Activated CD4-positive, alpha-beta T cell treated with anti-CD3 and anti-CD28 coated beads for 36 hours (primary cell): ENCODE measurements at regions of chr9 and their contacts with region 1.

Region 1: GRCh38 chr9:78014776-78015175 is 16.8 kb downstream of the GNAQ start:
- DNase-seq: no peak
- ATAC-seq: no peak
- H3K4me3 Mint-ChIP-seq: no peak overlapping the region
- H3K27ac Mint-ChIP-seq: no peak overlapping the region
- H3K4me1 Mint-ChIP-seq: peaks cover 50% of the 10 kb centered on the region
- H3K27me3 Mint-ChIP-seq: no peaks in the 10 kb centered on the region

Region 2: DNA sequence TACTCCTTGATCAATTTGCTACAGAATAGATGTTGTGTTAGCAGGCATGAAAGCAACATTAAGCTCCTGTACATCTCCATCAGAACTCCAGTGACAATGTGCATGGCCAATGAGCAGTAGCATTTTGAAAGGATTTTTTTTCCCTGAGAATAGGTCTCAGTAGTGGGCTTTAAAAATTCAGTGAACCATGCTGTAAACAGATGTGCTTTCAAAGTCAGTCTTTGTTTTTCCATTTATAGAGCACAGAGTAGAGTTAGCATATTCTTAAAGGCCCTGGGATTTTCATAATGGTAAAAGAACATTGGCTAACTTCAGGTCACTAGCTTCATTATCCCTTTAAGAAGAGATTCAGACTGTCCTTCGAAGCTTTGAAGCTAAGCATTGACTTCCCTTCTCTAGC is 686.7 kb before region 1 on chr9:
- CTCF ChIA-PET with region 1: no interaction called
- POLR2A ChIA-PET with region 1: no interaction called
- intact Hi-C with region 1: no loop called
- DNase-seq: no peak
- ATAC-seq: no peak
- H3K4me3 Mint-ChIP-seq: no peak overlapping the region
- H3K27ac Mint-ChIP-seq: no peak overlapping the region
- H3K4me1 Mint-ChIP-seq: peaks cover 7% of the 10 kb centered on the region
- H3K27me3 Mint-ChIP-seq: no peaks in the 10 kb centered on the region

Region 3: DNA sequence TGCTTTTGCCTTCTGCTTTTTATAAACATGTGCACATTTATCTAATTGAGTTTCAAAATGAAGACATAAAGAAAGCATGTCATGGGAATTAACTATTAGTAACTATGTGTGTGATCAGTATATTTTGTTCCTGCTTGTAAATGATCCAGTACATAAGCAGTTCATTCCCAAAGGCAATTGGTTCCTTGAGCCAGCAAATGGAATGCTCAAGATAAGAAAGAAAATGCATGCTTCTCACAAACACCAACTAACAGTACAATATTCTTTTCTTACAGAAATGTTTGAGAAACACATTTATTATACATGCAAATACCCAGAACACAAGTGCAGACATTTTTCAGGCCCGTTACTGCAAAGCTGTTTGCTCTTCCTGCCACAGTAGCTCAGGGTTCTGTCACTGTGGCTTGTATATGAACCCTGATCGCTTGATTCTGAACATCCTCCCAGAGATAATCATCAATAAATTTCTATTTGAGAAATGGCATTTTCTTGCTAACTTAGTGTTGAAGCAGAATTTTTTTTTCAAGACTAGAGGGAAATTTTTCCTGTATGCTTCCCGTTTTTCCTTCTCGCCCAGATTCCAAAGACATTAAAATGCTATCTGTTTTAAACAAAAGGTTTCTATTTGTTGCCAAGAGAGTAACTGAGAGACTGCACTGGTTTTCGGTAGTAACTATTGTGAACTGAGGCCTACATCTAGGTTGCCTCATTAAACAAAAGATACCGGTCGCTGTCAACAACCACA is 14.9 kb after region 1 on chr9:
- CTCF ChIA-PET with region 1: interaction called, 8 read pairs
- POLR2A ChIA-PET with region 1: no interaction called
- intact Hi-C with region 1: loop called in 1 of 2 experiments (anchors 1 kb)
- DNase-seq: peak; percentile 24
- ATAC-seq: peak; percentile 23
- H3K4me3 Mint-ChIP-seq: peak overlapping the region; percentile 89
- H3K27ac Mint-ChIP-seq: peak overlapping the region; percentile 89
- H3K4me1 Mint-ChIP-seq: peaks cover 46% of the 10 kb centered on the region
- H3K27me3 Mint-ChIP-seq: no peaks in the 10 kb centered on the region

Region 4: DNA sequence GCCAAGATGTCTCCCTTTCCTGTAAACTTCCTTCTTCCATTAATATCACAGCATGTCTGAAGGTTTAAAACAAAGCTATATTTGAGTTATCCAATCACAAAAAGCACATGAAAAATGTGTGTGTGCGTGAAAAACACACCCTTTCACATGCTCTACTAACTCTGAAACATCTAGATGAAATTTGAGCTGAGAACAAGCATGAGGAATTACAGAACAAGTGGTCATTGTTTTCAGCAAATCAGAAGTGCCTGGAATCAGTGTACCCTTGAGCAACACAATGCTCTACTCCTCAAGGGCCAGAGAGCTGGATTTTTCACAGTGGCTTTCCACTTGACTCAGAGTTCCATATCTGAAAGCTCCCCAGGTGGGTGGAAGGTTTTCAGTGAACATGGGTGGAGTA is 538.0 kb after region 1 on chr9:
- CTCF ChIA-PET with region 1: no interaction called
- POLR2A ChIA-PET with region 1: no interaction called
- intact Hi-C with region 1: no loop called
- DNase-seq: no peak
- ATAC-seq: no peak
- H3K4me3 Mint-ChIP-seq: no peak overlapping the region
- H3K27ac Mint-ChIP-seq: no peak overlapping the region
- H3K4me1 Mint-ChIP-seq: no peaks in the 10 kb centered on the region
- H3K27me3 Mint-ChIP-seq: peaks cover 6% of the 10 kb centered on the region